B cell (primary cell): ENCODE measurements at regions of chr1 and their contacts with region 1.

Region 1: GRCh38 chr1:36306902-36307456 is 811 bp downstream of the SH3D21 start:
- DNase-seq: peak; percentile 96
- ATAC-seq: peak; percentile 98
- H3K4me3 ChIP-seq: peak overlapping the region; percentile 9 to 78 (median 68)
- H3K4me3 Mint-ChIP-seq: peak overlapping the region; percentile 97
- H3K27ac ChIP-seq: peak overlapping the region in 1 of 2 donors; percentile 63
- H3K27ac Mint-ChIP-seq: peak overlapping the region; percentile 93
- H3K4me1 ChIP-seq: peaks cover 10 to 33% of the 10 kb centered on the region in 2 donors
- H3K4me1 Mint-ChIP-seq: peaks cover 29% of the 10 kb centered on the region
- H3K27me3 ChIP-seq: no peaks in the 10 kb centered on the region
- H3K27me3 Mint-ChIP-seq: no peaks in the 10 kb centered on the region
- CTCF ChIP-seq: no peak

Region 2: DNA sequence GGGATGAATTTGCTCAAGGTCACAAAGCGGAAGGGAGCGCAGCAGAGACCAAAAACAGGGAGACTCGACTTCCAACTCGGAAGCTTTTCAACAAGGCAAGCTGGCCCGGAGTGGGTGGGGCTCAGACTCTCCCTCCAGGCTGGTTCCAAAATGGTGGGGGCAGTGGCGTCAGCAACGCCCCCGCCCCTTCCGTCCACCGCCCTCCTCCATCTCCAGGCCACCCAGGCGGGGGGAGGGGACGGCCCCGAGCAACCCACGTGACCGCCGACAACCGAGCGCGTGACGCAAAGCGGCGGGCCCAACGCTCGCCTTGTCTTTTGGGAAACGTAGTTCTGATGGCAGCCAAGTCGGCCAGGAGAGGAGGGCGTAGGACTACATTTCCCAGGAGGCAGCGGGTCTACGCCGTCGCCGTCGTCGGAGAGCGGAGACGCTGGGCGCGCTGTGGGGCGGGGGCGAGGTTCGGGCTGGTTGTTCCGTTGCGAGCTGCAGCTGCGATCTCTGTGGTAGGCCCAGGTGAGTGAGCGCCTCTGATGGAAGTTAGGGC is 82.9 kb before region 1 on chr1 and contains the start of gene THRAP3:
- CTCF ChIA-PET with region 1: no interaction called
- POLR2A ChIA-PET with region 1: no interaction called
- intact Hi-C with region 1: loop called (anchors 1 kb)
- DNase-seq: peak; percentile 100
- ATAC-seq: peak; percentile 88
- H3K4me3 ChIP-seq: peak within 1 kb of the TSS; percentile 77 to 98 (median 91)
- H3K4me3 Mint-ChIP-seq: peak within 1 kb of the TSS; percentile 98
- H3K27ac ChIP-seq: peak within 1 kb of the TSS; percentile 95 to 100
- H3K27ac Mint-ChIP-seq: peak within 1 kb of the TSS; percentile 100
- H3K4me1 ChIP-seq: peaks cover 22 to 43% of the 10 kb centered on the region in 2 donors
- H3K4me1 Mint-ChIP-seq: peaks cover 34% of the 10 kb centered on the region
- H3K27me3 ChIP-seq: no peaks in the 10 kb centered on the region
- H3K27me3 Mint-ChIP-seq: no peaks in the 10 kb centered on the region
- CTCF ChIP-seq: no peak
- total RNA-seq, gene THRAP3: 153 and 159 TPM in 2 replicates

Region 3: GRCh38 chr1:36323597-36324352 is 16.8 kb after region 1 on chr1 and contains the start of gene EVA1B:
- CTCF ChIA-PET with region 1: interaction called, 3 read pairs
- POLR2A ChIA-PET with region 1: interaction called, 4 read pairs
- intact Hi-C with region 1: loop called (anchors 1 kb)
- DNase-seq: peak; percentile 49
- ATAC-seq: peak; percentile 46
- H3K4me3 ChIP-seq: peak within 1 kb of the TSS; percentile 35 to 78 (median 63)
- H3K4me3 Mint-ChIP-seq: peak within 1 kb of the TSS; percentile 84
- H3K27ac ChIP-seq: no peak within 1 kb of the TSS
- H3K27ac Mint-ChIP-seq: peak within 1 kb of the TSS; percentile 26
- H3K4me1 ChIP-seq: peaks cover 33 to 40% of the 10 kb centered on the region in 2 donors
- H3K4me1 Mint-ChIP-seq: peaks cover 32% of the 10 kb centered on the region
- H3K27me3 ChIP-seq: peaks cover 0 to 36% (median 12%) of the 10 kb centered on the region in 4 experiments
- H3K27me3 Mint-ChIP-seq: peaks cover 28% of the 10 kb centered on the region
- CTCF ChIP-seq: no peak
- total RNA-seq, gene EVA1B: 1.4 and 2.9 TPM in 2 replicates

Region 4: GRCh38 chr1:36397378-36398230 is 90.6 kb after region 1 on chr1 and contains the start of gene LSM10:
- CTCF ChIA-PET with region 1: no interaction called
- POLR2A ChIA-PET with region 1: no interaction called
- intact Hi-C with region 1: loop called (anchors 2 kb)
- DNase-seq: peak; percentile 93
- ATAC-seq: peak; percentile 88
- H3K4me3 ChIP-seq: peak within 1 kb of the TSS; percentile 76 to 99 (median 97)
- H3K4me3 Mint-ChIP-seq: peak within 1 kb of the TSS; percentile 92
- H3K27ac ChIP-seq: peak within 1 kb of the TSS; percentile 78 to 93
- H3K27ac Mint-ChIP-seq: peak within 1 kb of the TSS; percentile 94
- H3K4me1 ChIP-seq: peaks cover 20 to 47% of the 10 kb centered on the region in 2 donors
- H3K4me1 Mint-ChIP-seq: peaks cover 55% of the 10 kb centered on the region
- H3K27me3 ChIP-seq: no peaks in the 10 kb centered on the region
- H3K27me3 Mint-ChIP-seq: no peaks in the 10 kb centered on the region
- CTCF ChIP-seq: no peak
- total RNA-seq, gene LSM10: 70.6 and 73.5 TPM in 2 replicates